Posterior vena cava (tissue), 2 donors: ENCODE measurements at regions of chr16 and their contacts with region 1.

Region 1: DNA sequence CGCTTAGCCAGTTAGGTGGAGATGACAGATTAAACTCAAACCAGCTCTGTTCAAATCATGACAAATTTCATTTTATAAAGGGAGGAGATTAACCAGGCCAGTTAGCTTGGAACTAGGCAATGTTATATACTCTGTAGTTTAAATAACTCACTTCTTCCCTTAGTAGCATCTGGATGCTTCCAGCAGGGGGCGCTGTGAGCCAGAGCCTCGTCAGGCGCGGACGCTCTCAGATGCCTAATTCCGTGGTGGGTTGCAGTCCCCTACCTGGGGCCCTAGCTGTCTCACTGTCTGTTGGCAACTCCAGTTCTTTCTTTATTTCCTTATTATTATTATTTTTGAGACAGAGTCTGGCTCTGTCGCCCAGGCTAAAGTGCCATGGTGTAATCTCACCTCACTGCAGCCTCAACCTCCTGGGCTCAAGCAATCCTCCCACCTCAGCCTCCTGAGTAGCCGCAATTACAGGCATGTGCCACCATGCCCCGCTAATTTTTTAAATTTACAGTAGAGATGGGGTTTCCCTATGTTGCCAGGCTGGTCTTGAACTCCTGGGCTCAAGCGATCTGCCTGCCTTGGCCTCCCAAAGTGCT is 17.3 kb upstream of the WFDC1 start:
- DNase-seq: peak; percentile 90

Region 2: GRCh38 chr16:84239141-84239769 is 38.1 kb before region 1 on chr16:
- intact Hi-C with region 1: no loop called
- DNase-seq: no peak

Region 3: GRCh38 chr16:84308120-84308519 is 30.8 kb after region 1 on chr16:
- intact Hi-C with region 1: loop called in 1 of 2 experiments (anchors 2 kb)
- DNase-seq: no peak

Region 4: GRCh38 chr16:84484579-84485254 is 207.4 kb after region 1 on chr16:
- intact Hi-C with region 1: loop called (anchors 1 to 5 kb)
- DNase-seq: peak; percentile 86